ENCODE measurements at regions of chr2 and their contacts with region 1.

Region 1: GRCh38 chr2:46814149-46814961 is 101.3 kb downstream of the MCFD2 start:
- DNase-seq: peak in 1 of 2 experiments; percentile 20
- H3K4me3 ChIP-seq: no peak overlapping the region
- H3K27ac ChIP-seq: no peak overlapping the region
- H3K4me1 ChIP-seq: no peaks in the 10 kb centered on the region; a peak in 1 of 7 replicates
- H3K27me3 ChIP-seq: no peaks in the 10 kb centered on the region
- CTCF ChIP-seq: no peak
- EP300 ChIP-seq: no peak
- POLR2A ChIP-seq: no peak
- RAD21 ChIP-seq: no peak

Region 2: GRCh38 chr2:46732127-46732526 is 82.2 kb before region 1 on chr2:
- CTCF ChIA-PET with region 1: no interaction called
- POLR2A ChIA-PET with region 1: no interaction called
- DNase-seq: no peak
- H3K4me3 ChIP-seq: no peak overlapping the region
- H3K27ac ChIP-seq: no peak overlapping the region
- H3K4me1 ChIP-seq: peaks cover 0 to 9% (median 5%) of the 10 kb centered on the region in 4 experiments; a peak in 5 of 7 replicates
- H3K27me3 ChIP-seq: no peaks in the 10 kb centered on the region
- CTCF ChIP-seq: no peak
- EP300 ChIP-seq: no peak
- POLR2A ChIP-seq: no peak
- RAD21 ChIP-seq: no peak

Region 3: GRCh38 chr2:46803911-46804670 is 10.3 kb before region 1 on chr2:
- CTCF ChIA-PET with region 1: interaction called, 11 read pairs
- POLR2A ChIA-PET with region 1: interaction called, 3 read pairs
- DNase-seq: no peak
- H3K4me3 ChIP-seq: no peak overlapping the region
- H3K27ac ChIP-seq: no peak overlapping the region
- H3K4me1 ChIP-seq: no peaks in the 10 kb centered on the region
- H3K27me3 ChIP-seq: no peaks in the 10 kb centered on the region
- CTCF ChIP-seq: no peak
- EP300 ChIP-seq: no peak
- POLR2A ChIP-seq: no peak
- RAD21 ChIP-seq: no peak

Region 4: GRCh38 chr2:46915811-46916630 is 101.7 kb after region 1 on chr2:
- CTCF ChIA-PET with region 1: no interaction called
- POLR2A ChIA-PET with region 1: no interaction called
- DNase-seq: peak; percentile 60 to 88
- H3K4me3 ChIP-seq: peak overlapping the region; percentile 75 to 89 (median 87)
- H3K27ac ChIP-seq: peak overlapping the region; percentile 78
- H3K4me1 ChIP-seq: peaks cover 0 to 9% (median 2%) of the 10 kb centered on the region in 4 experiments; a peak in 4 of 7 replicates
- H3K27me3 ChIP-seq: no peaks in the 10 kb centered on the region
- CTCF ChIP-seq: no peak
- EP300 ChIP-seq: no peak
- POLR2A ChIP-seq: peak in 1 of 2 experiments; percentile 66
- RAD21 ChIP-seq: no peak

Region 5: DNA sequence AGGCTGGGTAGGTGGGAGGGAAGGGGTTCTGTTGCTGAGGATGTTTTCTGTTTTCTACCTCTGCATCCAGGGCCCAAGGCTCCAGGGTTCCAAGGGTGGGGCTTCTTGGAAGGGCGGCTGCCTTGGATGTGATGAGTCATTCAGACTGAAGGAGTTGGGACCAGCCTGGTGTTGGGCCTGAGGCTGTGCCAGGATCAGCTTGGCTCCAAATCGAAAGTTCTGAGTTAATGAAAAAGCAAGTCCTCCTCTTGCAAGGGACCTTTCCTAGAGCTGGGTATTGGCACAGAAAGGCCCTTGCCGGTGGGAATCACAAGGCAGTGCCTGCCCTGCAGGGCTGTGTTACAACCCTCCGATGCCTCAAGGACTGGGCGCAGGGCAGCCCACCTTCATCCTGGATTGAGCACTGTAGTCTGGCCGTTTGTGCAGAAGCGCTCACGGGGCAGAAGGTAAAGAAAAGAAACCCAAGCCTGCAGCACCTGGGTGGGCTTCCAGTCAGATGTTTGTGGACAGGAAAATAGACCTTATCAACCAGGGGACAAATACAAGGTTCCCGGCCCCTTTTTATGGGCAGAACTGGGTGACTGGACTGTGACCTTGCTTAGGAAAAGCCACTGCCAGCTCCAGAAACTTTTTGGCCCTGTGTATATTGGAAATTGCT is 153.8 kb after region 1 on chr2:
- CTCF ChIA-PET with region 1: no interaction called
- POLR2A ChIA-PET with region 1: no interaction called
- DNase-seq: no peak
- H3K4me3 ChIP-seq: no peak overlapping the region
- H3K27ac ChIP-seq: no peak overlapping the region
- H3K4me1 ChIP-seq: no peaks in the 10 kb centered on the region
- H3K27me3 ChIP-seq: no peaks in the 10 kb centered on the region
- CTCF ChIP-seq: no peak
- EP300 ChIP-seq: no peak
- POLR2A ChIP-seq: no peak
- RAD21 ChIP-seq: no peak

Measured in H1 (cell line).